Left lung (tissue), 14 donors: ENCODE measurements at regions of chr11 and their contacts with region 1.

Region 1: DNA sequence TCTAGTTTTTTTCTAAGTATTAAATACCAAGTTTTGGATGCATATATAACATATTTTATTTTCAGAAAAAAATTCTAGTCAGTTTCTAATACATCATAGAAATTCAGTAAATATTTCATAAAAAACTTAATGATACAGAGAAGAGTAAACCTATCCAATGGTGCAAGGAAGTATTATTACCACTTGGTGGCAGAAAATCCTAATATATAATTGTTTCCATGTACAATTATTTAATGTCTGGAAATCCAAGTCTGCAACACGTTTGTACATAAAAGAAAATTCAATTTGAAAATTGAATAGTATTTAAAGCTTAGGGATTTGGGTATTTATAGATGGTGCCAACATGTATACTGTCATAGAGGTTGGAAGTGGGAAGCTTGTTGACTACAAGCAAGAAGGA is 127.0 kb downstream of the TRPC6 start:
- DNase-seq: peak in 1 of 4 donors; percentile 37
- ATAC-seq: peak; percentile 55
- H3K4me3 ChIP-seq: no peak overlapping the region
- H3K27ac ChIP-seq: no peak overlapping the region
- H3K4me1 ChIP-seq: no peaks in the 10 kb centered on the region
- H3K27me3 ChIP-seq: no peaks in the 10 kb centered on the region
- CTCF ChIP-seq: peak; percentile 35 to 39

Region 2: GRCh38 chr11:101848262-101848661 is 391.4 kb after region 1 on chr11:
- intact Hi-C with region 1: loop called in 1 of 2 experiments (anchors 5 kb)
- DNase-seq: peak in 1 of 4 donors; percentile 62
- ATAC-seq: no peak
- H3K4me3 ChIP-seq: no peak overlapping the region
- H3K27ac ChIP-seq: no peak overlapping the region
- H3K4me1 ChIP-seq: no peaks in the 10 kb centered on the region
- H3K27me3 ChIP-seq: no peaks in the 10 kb centered on the region
- CTCF ChIP-seq: no peak